Naive thymus-derived CD4-positive, alpha-beta T cell (primary cell): ENCODE measurements at regions of chr2 and their contacts with region 1.

Region 1: DNA sequence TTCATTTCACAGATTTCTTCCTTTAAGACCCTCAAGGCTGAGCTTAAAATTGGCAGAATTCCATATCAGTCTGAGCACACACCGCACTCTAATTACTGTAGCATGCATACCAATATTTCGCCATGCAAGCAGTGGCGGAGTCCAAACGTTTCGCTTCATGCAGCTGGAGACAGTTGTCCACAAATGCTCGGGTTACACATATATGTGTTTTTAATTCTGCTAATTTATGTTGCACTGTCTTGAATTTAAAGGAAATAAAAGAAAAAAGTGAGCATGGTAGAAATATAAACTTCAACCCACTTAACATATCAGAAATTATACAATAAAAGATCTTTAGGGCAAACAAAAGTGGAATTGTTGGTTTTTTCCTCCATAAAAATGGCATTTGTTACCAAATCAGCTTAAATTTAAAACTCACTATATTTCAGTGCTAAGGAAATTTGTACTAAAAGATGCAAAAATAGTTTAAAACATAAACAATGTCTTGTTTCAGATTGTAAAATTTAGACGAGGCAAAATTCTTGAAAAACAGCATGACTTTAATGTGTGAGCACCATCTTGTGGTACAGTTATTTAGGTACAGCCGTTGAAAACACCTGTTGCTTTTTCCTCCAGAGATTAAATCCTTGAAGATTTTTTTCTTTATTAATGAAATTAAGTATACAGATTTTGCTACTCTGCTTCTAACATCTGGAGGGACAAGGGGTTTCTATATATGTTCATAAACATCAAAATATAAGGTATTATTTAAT is 24.1 kb upstream of the KANSL1L start:
- DNase-seq: peak in 7 of 9 donors; percentile 20 to 55 (median 39)
- ATAC-seq: peak; percentile 58
- H3K4me3 ChIP-seq: no peak overlapping the region
- H3K4me3 Mint-ChIP-seq: no peak overlapping the region
- H3K27ac ChIP-seq: no peak overlapping the region
- H3K27ac Mint-ChIP-seq: no peak overlapping the region
- H3K4me1 ChIP-seq: no peaks in the 10 kb centered on the region
- H3K4me1 Mint-ChIP-seq: peaks cover 0 to 3% (median 0%) of the 10 kb centered on the region in 7 donors
- H3K27me3 ChIP-seq: no peaks in the 10 kb centered on the region
- H3K27me3 Mint-ChIP-seq: peaks cover 0 to 16% (median 0%) of the 10 kb centered on the region in 5 donors

Region 2: GRCh38 chr2:208392300-208393080 is 1802.8 kb before region 1 on chr2:
- CTCF ChIA-PET with region 1: no interaction called
- POLR2A ChIA-PET with region 1: no interaction called
- intact Hi-C with region 1: loop called in 1 of 2 experiments (anchors 1 kb)
- DNase-seq: no peak
- ATAC-seq: no peak
- H3K4me3 ChIP-seq: no peak overlapping the region
- H3K4me3 Mint-ChIP-seq: no peak overlapping the region
- H3K27ac ChIP-seq: no peak overlapping the region
- H3K27ac Mint-ChIP-seq: no peak overlapping the region
- H3K4me1 ChIP-seq: no peaks in the 10 kb centered on the region
- H3K4me1 Mint-ChIP-seq: no peaks in the 10 kb centered on the region
- H3K27me3 ChIP-seq: no peaks in the 10 kb centered on the region
- H3K27me3 Mint-ChIP-seq: peaks cover 5 to 22% (median 11%) of the 10 kb centered on the region in 5 donors

Region 3: DNA sequence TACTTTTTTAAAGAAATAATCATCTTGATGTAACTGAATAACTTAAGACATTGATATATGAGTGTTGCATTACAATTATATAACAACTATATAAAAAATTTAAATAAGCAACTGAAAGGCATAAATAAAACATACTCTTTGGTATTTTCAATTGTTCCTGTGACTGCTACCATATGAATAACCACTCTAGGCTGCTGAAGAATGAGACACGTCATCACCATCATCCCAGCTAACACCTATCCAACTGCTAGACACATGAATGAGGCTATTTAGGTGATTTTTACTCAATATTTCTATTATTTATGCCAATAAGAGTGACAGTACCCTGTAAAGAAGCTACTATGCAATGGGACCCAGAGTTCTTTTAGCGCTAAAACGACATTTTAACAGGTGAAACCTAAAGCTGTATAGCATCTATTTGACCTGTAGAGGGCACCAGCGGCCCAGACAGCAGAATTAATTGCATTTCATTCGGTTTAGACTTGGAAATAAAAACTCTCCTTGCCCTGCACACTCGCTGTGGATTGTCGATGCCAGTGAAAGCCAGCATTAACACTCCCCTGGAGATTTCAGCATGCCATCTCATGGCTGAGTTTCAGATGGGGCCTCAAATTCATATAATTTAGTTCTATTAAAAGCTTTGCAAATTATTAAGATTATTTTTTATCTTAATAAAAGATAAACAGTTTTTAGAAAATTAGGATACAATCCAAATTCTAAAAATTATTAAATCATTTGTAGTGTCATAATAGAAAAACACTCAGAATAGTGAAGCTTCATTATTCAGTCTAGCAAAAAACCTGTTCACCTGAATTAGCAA is 860.9 kb before region 1 on chr2:
- CTCF ChIA-PET with region 1: interaction called, 7 read pairs
- POLR2A ChIA-PET with region 1: no interaction called
- intact Hi-C with region 1: loop called (anchors 2 to 5 kb)
- DNase-seq: peak in 5 of 9 donors; percentile 0 to 23 (median 9)
- ATAC-seq: peak; percentile 29
- H3K4me3 ChIP-seq: no peak overlapping the region
- H3K4me3 Mint-ChIP-seq: no peak overlapping the region
- H3K27ac ChIP-seq: no peak overlapping the region
- H3K27ac Mint-ChIP-seq: no peak overlapping the region
- H3K4me1 ChIP-seq: no peaks in the 10 kb centered on the region
- H3K4me1 Mint-ChIP-seq: no peaks in the 10 kb centered on the region
- H3K27me3 ChIP-seq: no peaks in the 10 kb centered on the region
- H3K27me3 Mint-ChIP-seq: peaks cover 0 to 7% (median 3%) of the 10 kb centered on the region in 5 donors

Region 4: DNA sequence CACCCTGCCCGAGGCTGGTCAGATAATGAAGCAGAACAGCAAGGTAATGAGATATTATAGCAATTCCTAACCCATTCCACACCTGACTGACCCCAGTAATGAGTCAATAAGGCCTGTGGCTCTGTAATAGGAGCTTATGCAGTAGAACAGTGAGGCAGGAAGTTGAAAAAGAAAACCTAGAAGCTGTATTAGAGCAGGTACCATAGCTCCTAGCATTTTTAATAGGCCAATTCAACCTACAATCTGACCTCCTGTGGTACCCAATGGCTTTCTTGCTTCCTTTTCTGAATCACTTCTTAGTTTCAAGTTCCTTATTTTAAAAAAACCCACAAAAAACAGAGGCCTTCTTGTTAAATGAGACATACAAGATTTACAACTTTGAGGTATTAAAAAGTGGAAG is 815.0 kb before region 1 on chr2:
- CTCF ChIA-PET with region 1: no interaction called
- POLR2A ChIA-PET with region 1: no interaction called
- intact Hi-C with region 1: no loop called
- DNase-seq: no peak
- ATAC-seq: peak; percentile 22
- H3K4me3 ChIP-seq: no peak overlapping the region
- H3K4me3 Mint-ChIP-seq: no peak overlapping the region
- H3K27ac ChIP-seq: no peak overlapping the region
- H3K27ac Mint-ChIP-seq: no peak overlapping the region
- H3K4me1 ChIP-seq: no peaks in the 10 kb centered on the region
- H3K4me1 Mint-ChIP-seq: peaks cover 0 to 6% (median 0%) of the 10 kb centered on the region in 7 donors
- H3K27me3 ChIP-seq: no peaks in the 10 kb centered on the region
- H3K27me3 Mint-ChIP-seq: peaks cover 0 to 5% (median 0%) of the 10 kb centered on the region in 5 donors

Region 5: GRCh38 chr2:209977386-209978239 is 217.7 kb before region 1 on chr2:
- CTCF ChIA-PET with region 1: interaction called, 37 read pairs
- POLR2A ChIA-PET with region 1: interaction called, 3 read pairs
- intact Hi-C with region 1: loop called (anchors 1 kb)
- DNase-seq: peak in 6 of 9 donors; percentile 27 to 61 (median 48)
- ATAC-seq: no peak
- H3K4me3 ChIP-seq: no peak overlapping the region
- H3K4me3 Mint-ChIP-seq: no peak overlapping the region
- H3K27ac ChIP-seq: no peak overlapping the region
- H3K27ac Mint-ChIP-seq: no peak overlapping the region
- H3K4me1 ChIP-seq: no peaks in the 10 kb centered on the region
- H3K4me1 Mint-ChIP-seq: no peaks in the 10 kb centered on the region
- H3K27me3 ChIP-seq: no peaks in the 10 kb centered on the region
- H3K27me3 Mint-ChIP-seq: peaks cover 4 to 18% (median 11%) of the 10 kb centered on the region in 5 donors

Region 6: DNA sequence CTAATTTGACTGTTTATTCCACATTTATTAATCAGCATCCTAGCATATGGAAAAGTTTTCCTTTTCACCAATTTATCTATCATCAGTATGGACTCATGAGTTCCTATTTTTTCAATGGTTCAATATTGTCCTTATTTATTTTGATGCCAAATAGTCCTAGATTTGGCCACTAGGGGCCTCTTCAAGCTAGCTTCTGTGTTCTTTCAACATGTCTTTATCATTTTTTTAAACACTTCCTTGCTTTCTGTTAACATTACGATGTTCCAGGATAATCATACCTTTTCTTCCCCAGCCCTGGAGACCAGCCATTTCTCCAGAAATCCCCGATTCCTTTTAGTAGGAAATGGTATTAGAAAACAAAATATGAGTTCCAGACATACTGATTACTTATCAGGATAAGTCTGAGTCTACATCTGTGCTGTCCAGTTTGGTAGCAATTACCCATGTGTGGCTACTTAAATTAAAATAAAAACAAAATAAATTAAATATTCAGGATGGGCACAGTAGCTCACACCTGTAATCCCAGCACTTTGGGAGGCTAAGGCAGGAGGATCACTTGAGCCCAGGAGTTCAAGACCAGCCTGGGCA is 122.3 kb before region 1 on chr2:
- CTCF ChIA-PET with region 1: interaction called, 3 read pairs
- POLR2A ChIA-PET with region 1: interaction called, 3 read pairs
- intact Hi-C with region 1: loop called (anchors 1 kb)
- DNase-seq: peak in 2 of 9 donors; percentile 6 to 7
- ATAC-seq: no peak
- H3K4me3 ChIP-seq: no peak overlapping the region
- H3K4me3 Mint-ChIP-seq: no peak overlapping the region
- H3K27ac ChIP-seq: no peak overlapping the region
- H3K27ac Mint-ChIP-seq: no peak overlapping the region
- H3K4me1 ChIP-seq: no peaks in the 10 kb centered on the region
- H3K4me1 Mint-ChIP-seq: no peaks in the 10 kb centered on the region
- H3K27me3 ChIP-seq: no peaks in the 10 kb centered on the region
- H3K27me3 Mint-ChIP-seq: no peaks in the 10 kb centered on the region

Region 7: DNA sequence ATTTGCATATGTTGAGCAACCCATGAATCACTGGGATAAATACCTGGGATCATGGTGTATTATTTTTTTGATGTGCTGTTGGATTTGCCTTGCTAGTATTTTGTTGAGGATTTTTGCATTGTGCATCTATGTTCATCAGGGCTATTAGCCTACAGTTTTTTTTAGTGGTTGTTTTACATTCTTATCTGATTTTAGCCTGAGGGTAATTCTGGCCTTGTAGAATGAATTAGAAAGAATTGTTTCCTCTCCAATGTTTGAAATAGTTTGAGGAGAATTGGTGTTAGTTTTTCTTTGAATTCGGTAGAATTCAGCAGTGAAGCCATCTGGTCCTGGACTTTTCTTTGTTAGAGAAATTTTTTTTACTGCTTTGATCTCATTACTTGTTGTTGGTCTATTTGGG is 133.4 kb after region 1 on chr2:
- CTCF ChIA-PET with region 1: no interaction called
- POLR2A ChIA-PET with region 1: no interaction called
- intact Hi-C with region 1: no loop called
- DNase-seq: no peak
- ATAC-seq: no peak
- H3K4me3 ChIP-seq: no peak overlapping the region
- H3K4me3 Mint-ChIP-seq: no peak overlapping the region
- H3K27ac ChIP-seq: no peak overlapping the region
- H3K27ac Mint-ChIP-seq: no peak overlapping the region
- H3K4me1 ChIP-seq: no peaks in the 10 kb centered on the region
- H3K4me1 Mint-ChIP-seq: no peaks in the 10 kb centered on the region
- H3K27me3 ChIP-seq: no peaks in the 10 kb centered on the region
- H3K27me3 Mint-ChIP-seq: peaks cover 0 to 12% (median 0%) of the 10 kb centered on the region in 5 donors